Sciatic nerve (tissue), 2 donors: ENCODE measurements at regions of chr16 and their contacts with region 1.

Region 1: DNA sequence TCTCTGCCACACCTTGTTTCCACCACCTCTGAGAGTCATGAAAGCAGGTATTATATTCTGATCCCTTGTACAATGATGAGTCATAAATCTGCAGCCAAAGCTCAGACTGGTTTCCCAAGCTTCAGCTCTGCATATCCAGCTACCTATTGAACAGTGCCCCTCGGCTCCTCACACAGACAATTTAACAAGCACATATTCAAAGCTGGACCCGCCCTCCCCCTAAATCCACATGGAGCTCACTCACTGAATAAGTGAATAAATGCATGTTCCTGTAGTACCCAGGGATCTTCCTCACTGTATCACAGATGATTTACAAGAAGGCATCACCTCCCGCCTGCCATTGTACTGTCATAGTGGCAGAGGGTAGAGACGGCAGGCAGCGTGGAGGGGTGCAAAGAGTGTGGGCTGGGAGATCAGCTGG is 516.4 kb downstream of the GRIN2A start:
- DNase-seq: no peak
- ATAC-seq: no peak

Region 2: GRCh38 chr16:9778849-9779248 is 113.0 kb after region 1 on chr16:
- intact Hi-C with region 1: no loop called
- DNase-seq: no peak
- ATAC-seq: no peak

Region 3: DNA sequence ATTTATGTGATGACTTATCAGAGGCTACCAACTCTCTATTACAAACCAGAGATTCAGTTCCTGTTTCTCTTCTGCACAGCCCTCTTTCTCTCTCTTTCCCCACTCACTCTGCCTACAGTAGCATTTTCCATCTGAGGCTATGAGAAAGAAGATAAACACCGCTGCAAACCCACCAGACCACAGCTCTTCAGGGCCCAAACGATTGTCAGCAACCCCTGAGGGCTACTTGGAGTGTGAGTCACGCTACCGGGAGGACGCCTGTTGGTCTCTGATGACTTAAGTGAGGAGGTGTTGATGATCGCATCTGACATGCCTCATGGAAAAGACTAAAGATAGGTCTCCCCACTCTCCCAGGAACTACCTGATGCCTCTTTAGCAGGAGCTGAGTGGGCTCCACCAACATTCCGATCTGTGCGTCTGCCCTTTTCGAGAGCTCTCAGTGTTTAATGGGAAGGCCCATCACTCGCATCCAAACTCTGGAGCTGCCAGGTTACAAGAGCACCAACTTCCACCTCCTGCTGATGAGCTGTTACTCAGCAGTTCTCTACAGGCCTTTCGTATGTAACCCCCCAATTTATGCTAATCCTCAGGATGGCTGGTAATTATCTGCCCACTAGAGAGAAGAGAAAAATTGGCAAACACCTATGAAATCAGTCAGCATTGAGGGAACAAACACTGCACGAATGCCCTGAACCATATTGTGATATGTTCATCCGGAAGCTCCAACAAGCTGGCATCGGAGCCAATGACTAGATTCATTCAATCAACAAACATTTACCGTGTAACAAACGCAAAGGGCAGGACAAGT is 507.2 kb after region 1 on chr16:
- intact Hi-C with region 1: loop called (anchors 10 kb)
- DNase-seq: no peak
- ATAC-seq: no peak

Region 4: GRCh38 chr16:10188236-10188635 is 522.4 kb after region 1 on chr16:
- intact Hi-C with region 1: no loop called
- DNase-seq: no peak
- ATAC-seq: no peak